ENCODE measurements at regions of chr22 and their contacts with region 1.

Region 1: DNA sequence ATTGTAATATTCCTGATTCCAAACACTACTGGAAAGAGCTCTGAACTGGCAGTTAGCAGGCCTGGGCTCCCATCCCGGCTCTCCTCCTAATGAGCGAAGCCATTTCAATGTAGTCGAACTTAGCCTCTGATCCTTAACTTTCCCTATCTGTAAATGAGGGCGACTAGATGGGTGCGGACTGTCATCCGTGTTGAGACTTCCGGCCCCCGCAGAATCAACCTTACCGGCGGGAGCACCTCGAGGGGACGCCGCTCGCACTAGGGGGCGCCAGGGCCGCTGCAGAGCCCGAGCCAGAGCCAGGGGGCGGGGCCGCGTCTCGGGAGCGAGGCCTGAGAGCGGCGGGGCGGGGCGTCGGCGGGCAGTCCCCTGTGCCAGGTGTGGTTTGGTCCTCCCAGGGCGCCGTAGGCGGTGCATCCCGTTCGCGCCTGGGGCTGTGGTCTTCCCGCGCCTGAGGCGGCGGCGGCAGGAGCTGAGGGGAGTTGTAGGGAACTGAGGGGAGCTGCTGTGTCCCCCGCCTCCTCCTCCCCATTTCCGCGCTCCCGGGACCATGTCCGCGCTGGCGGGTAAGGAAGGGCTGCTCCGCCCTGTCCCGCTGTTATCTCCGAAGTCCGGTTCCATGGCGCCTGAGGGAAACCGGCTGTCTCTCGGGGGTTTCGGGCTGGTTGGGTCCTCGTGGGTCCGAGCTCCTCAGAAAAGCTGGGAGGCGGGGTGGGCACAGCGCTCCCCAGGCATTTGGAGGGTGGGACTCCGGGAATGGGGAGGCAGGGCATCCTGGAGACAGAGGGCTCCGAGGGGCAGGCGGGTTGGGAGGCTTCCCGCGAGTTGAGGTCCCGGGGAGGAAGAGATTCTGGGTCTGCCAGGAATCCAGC is at the start of gene LIMK2:
- DNase-seq: peak; percentile 21
- H3K4me3 ChIP-seq: peak within 1 kb of the TSS; percentile 91
- H3K27me3 ChIP-seq: no peaks in the 10 kb centered on the region
- CTCF ChIP-seq: peak; percentile 83
- polyA plus RNA-seq, gene LIMK2: 5.2 and 5.5 TPM in 2 replicates

Region 2: DNA sequence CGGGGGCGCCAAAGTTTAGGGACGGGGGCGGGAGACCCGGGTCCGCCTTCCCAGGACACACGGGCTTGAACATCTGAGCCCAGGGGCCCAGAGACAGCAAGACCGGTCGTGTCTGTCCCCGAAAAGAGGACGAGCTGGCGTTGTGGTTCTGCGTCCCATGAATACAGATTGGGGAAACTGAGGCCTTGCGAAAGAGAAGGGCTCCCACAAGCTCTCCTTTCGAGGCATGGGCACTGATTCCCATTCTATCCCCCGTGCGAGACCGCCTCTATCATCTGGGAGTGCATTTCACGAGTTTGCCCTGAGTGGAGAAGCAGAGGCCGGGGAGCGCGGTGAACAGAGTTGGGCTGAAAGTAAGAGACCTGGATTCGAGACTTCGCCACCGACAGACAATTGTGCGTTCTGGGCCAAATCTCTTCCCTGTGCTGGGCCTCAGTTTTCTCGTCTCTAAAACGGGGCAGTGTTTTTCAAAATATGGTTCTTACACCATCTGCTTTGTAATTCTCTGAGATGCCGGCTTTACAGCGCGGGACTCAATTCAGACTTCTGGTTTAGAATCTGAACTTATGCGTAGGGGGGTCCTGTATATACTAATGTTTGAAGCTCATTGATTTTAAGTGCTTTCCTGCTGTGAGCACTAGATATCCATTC is 51.6 kb before region 1 on chr22:
- CTCF ChIA-PET with region 1: interaction called, 12 read pairs
- POLR2A ChIA-PET with region 1: no interaction called
- DNase-seq: no peak
- H3K4me3 ChIP-seq: peak overlapping the region; percentile 62
- H3K27me3 ChIP-seq: no peaks in the 10 kb centered on the region
- CTCF ChIP-seq: no peak

Region 3: GRCh38 chr22:31192513-31192912 is 19.6 kb before region 1 on chr22:
- CTCF ChIA-PET with region 1: interaction called, 26 read pairs
- POLR2A ChIA-PET with region 1: interaction called, 4 read pairs
- DNase-seq: no peak
- H3K4me3 ChIP-seq: no peak overlapping the region
- H3K27me3 ChIP-seq: no peaks in the 10 kb centered on the region
- CTCF ChIP-seq: no peak

Region 4: GRCh38 chr22:31199183-31199582 is 12.9 kb before region 1 on chr22:
- CTCF ChIA-PET with region 1: interaction called, 34 read pairs
- POLR2A ChIA-PET with region 1: no interaction called
- DNase-seq: no peak
- H3K4me3 ChIP-seq: no peak overlapping the region
- H3K27me3 ChIP-seq: no peaks in the 10 kb centered on the region
- CTCF ChIP-seq: no peak

Region 5: DNA sequence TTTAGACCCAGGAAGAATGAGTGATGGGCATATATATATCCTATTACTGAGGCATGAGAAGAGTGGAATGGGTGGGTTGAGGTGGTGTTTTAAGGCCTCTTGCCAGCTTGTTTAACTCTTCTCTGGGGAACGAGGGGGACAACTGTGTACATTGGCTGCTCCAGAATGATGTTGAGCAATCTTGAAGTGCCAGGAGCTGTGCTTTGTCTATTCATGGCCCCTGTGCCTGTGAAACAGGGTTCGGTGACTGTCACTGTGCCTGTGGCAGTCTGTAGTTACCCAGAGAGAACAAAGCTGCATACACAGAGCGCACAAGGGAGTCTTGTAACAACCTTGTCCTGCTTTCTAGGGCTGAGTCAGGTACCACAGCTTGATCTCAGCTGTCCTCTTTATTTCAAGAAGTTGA is 11.7 kb after region 1 on chr22:
- CTCF ChIA-PET with region 1: interaction called, 20 read pairs
- POLR2A ChIA-PET with region 1: no interaction called
- DNase-seq: no peak
- H3K4me3 ChIP-seq: no peak overlapping the region
- H3K27me3 ChIP-seq: no peaks in the 10 kb centered on the region
- CTCF ChIP-seq: no peak

Measured in BJ (cell line).